Caco-2 (cell line): ENCODE measurements at regions of chr14 and their contacts with region 1.

Region 1: GRCh38 chr14:61694830-61695694 is at the start of gene HIF1A:
- DNase-seq: peak; percentile 97 to 98
- H3K4me3 ChIP-seq: peak within 1 kb of the TSS; percentile 79
- H3K4me3 Mint-ChIP-seq: peak within 1 kb of the TSS; percentile 91
- H3K27ac Mint-ChIP-seq: peak within 1 kb of the TSS; percentile 94
- H3K4me1 ChIP-seq: peaks cover 17% of the 10 kb centered on the region
- H3K4me1 Mint-ChIP-seq: peaks cover 20% of the 10 kb centered on the region
- H3K27me3 ChIP-seq: no peaks in the 10 kb centered on the region
- H3K27me3 Mint-ChIP-seq: no peaks in the 10 kb centered on the region
- CTCF ChIP-seq: peak in 1 of 2 experiments; percentile 21
- total RNA-seq, gene HIF1A: 125 and 127 TPM in 2 replicates

Region 2: GRCh38 chr14:61475316-61475715 is 219.7 kb before region 1 on chr14:
- CTCF ChIA-PET with region 1: no interaction called
- POLR2A ChIA-PET with region 1: interaction called, 3 read pairs
- intact Hi-C with region 1: loop called (anchors 5 kb)
- DNase-seq: peak in 1 of 2 experiments; percentile 60
- H3K4me3 ChIP-seq: no peak overlapping the region
- H3K4me3 Mint-ChIP-seq: no peak overlapping the region
- H3K27ac Mint-ChIP-seq: no peak overlapping the region
- H3K4me1 ChIP-seq: no peaks in the 10 kb centered on the region
- H3K4me1 Mint-ChIP-seq: peaks cover 6% of the 10 kb centered on the region
- H3K27me3 ChIP-seq: no peaks in the 10 kb centered on the region
- H3K27me3 Mint-ChIP-seq: no peaks in the 10 kb centered on the region
- CTCF ChIP-seq: peak; percentile 61 to 77

Region 3: GRCh38 chr14:61561657-61562276 is 133.3 kb before region 1 on chr14:
- CTCF ChIA-PET with region 1: interaction called, 4 read pairs
- POLR2A ChIA-PET with region 1: interaction called, 20 read pairs
- intact Hi-C with region 1: loop called (anchors 1 kb)
- DNase-seq: peak; percentile 62 to 76
- H3K4me3 ChIP-seq: no peak overlapping the region
- H3K4me3 Mint-ChIP-seq: peak overlapping the region; percentile 28
- H3K27ac Mint-ChIP-seq: peak overlapping the region; percentile 94
- H3K4me1 ChIP-seq: peaks cover 56% of the 10 kb centered on the region
- H3K4me1 Mint-ChIP-seq: peaks cover 33% of the 10 kb centered on the region
- H3K27me3 ChIP-seq: no peaks in the 10 kb centered on the region
- H3K27me3 Mint-ChIP-seq: no peaks in the 10 kb centered on the region
- CTCF ChIP-seq: no peak

Region 4: GRCh38 chr14:61581955-61582615 is 113.0 kb before region 1 on chr14:
- CTCF ChIA-PET with region 1: no interaction called
- POLR2A ChIA-PET with region 1: interaction called, 11 read pairs
- intact Hi-C with region 1: no loop called
- DNase-seq: no peak
- H3K4me3 ChIP-seq: no peak overlapping the region
- H3K4me3 Mint-ChIP-seq: peak overlapping the region; percentile 36
- H3K27ac Mint-ChIP-seq: peak overlapping the region; percentile 48
- H3K4me1 ChIP-seq: peaks cover 26% of the 10 kb centered on the region
- H3K4me1 Mint-ChIP-seq: peaks cover 25% of the 10 kb centered on the region
- H3K27me3 ChIP-seq: no peaks in the 10 kb centered on the region
- H3K27me3 Mint-ChIP-seq: no peaks in the 10 kb centered on the region
- CTCF ChIP-seq: no peak

Region 5: GRCh38 chr14:61713724-61714414 is 18.8 kb after region 1 on chr14:
- CTCF ChIA-PET with region 1: no interaction called
- POLR2A ChIA-PET with region 1: no interaction called
- intact Hi-C with region 1: loop called (anchors 2 kb)
- DNase-seq: no peak
- H3K4me3 ChIP-seq: no peak overlapping the region
- H3K4me3 Mint-ChIP-seq: no peak overlapping the region
- H3K27ac Mint-ChIP-seq: no peak overlapping the region
- H3K4me1 ChIP-seq: peaks cover 28% of the 10 kb centered on the region
- H3K4me1 Mint-ChIP-seq: peaks cover 33% of the 10 kb centered on the region
- H3K27me3 ChIP-seq: no peaks in the 10 kb centered on the region
- H3K27me3 Mint-ChIP-seq: no peaks in the 10 kb centered on the region
- CTCF ChIP-seq: no peak

Region 6: DNA sequence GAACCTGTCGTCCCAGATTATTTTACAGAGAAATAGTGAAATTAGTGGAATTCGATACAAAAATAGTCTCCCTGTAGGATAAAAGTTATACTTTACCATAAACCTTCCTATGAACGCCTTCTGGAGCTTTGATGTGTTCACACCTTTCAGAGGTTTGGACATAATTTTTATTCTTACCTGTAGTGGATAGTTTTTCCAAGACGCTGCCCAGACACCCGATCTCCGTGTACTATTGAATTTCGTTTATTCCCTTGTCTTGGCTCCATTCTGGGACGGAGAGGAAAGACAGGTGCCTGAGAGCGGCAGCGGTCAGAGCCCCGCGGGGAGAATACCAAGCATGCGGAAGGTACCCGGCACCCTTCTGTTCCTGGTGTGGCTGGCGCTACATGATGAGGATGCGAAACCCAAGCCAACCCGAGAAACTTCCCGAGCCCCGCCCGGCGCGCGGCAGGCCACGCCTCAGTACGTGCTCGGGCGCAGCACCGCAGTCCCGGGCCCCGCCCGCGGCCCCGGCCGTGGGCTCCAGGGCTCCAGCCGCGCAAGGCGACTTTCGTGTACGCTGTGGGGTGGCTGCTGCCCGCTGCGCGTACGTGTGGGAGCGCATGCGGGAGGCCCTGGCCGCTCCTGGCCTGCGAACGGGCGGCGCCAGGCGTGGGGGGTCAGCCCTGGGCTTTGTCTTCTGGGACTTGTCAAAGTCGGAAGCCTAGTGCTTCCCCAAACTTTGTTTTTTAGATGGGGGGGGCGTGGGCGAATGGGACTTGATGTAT is 55.8 kb after region 1 on chr14:
- CTCF ChIA-PET with region 1: no interaction called
- POLR2A ChIA-PET with region 1: no interaction called
- intact Hi-C with region 1: loop called (anchors 5 kb)
- DNase-seq: peak; percentile 82 to 86
- H3K4me3 ChIP-seq: peak overlapping the region; percentile 70
- H3K4me3 Mint-ChIP-seq: peak overlapping the region; percentile 80
- H3K27ac Mint-ChIP-seq: peak overlapping the region; percentile 61
- H3K4me1 ChIP-seq: peaks cover 40% of the 10 kb centered on the region
- H3K4me1 Mint-ChIP-seq: peaks cover 15% of the 10 kb centered on the region
- H3K27me3 ChIP-seq: no peaks in the 10 kb centered on the region
- H3K27me3 Mint-ChIP-seq: no peaks in the 10 kb centered on the region
- CTCF ChIP-seq: no peak

Region 7: DNA sequence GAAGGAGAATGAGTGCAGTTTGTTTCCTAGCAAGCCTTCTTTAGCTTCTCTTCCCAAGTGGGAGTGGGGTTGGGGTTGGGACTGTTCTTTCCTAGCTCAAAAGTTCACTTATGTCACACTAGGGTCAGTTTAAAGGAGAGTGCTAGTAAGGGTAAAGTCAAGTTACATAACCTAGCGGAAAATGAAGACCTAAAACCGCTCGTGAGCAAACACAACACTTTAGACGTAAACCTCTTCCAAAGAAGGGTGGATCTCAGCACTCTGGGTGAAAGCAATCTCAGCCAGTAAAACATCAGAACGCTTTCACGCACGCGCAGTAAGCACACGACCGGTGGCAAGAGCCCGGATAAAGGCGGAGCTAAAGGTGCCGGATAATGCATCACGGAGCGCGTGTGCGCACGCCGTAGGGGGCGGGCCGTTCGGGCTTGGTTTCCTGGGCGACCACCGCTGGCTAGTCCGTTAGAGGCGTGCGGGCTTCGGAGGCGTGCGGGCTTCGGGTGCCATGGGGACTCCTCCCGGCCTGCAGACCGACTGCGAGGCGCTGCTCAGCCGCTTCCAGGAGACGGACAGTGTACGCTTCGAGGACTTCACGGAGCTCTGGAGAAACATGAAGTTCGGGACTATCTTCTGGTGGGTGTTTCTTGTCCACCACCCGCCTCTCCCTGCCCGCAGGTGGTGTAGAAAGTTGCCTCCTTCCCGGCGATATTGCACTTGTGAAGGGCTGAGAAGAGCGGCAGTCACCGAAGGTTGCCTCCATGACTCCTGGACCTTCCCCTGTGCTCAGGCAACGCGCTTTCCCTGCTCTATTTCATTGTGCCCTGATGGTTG is 67.1 kb after region 1 on chr14 and contains the start of gene SNAPC1:
- CTCF ChIA-PET with region 1: interaction called, 4 read pairs
- POLR2A ChIA-PET with region 1: interaction called, 10 read pairs
- intact Hi-C with region 1: loop called (anchors 2 kb)
- DNase-seq: peak; percentile 95
- H3K4me3 ChIP-seq: peak within 1 kb of the TSS; percentile 81
- H3K4me3 Mint-ChIP-seq: peak within 1 kb of the TSS; percentile 99
- H3K27ac Mint-ChIP-seq: peak within 1 kb of the TSS; percentile 97
- H3K4me1 ChIP-seq: 0 out of 2 replicates have a peak, but pooled peaks cover 5% of the 10 kb centered on the region
- H3K4me1 Mint-ChIP-seq: peaks cover 7% of the 10 kb centered on the region
- H3K27me3 ChIP-seq: no peaks in the 10 kb centered on the region
- H3K27me3 Mint-ChIP-seq: no peaks in the 10 kb centered on the region
- CTCF ChIP-seq: no peak
- total RNA-seq, gene SNAPC1: 5.1 and 6.0 TPM in 2 replicates